Cardiac septum (tissue), 1 donor: ENCODE measurements at regions of chr9 and their contacts with region 1.

Region 1: GRCh38 chr9:68584189-68585033 is 43.7 kb upstream of the TMEM252 start:
- DNase-seq: peak; percentile 93

Region 2: DNA sequence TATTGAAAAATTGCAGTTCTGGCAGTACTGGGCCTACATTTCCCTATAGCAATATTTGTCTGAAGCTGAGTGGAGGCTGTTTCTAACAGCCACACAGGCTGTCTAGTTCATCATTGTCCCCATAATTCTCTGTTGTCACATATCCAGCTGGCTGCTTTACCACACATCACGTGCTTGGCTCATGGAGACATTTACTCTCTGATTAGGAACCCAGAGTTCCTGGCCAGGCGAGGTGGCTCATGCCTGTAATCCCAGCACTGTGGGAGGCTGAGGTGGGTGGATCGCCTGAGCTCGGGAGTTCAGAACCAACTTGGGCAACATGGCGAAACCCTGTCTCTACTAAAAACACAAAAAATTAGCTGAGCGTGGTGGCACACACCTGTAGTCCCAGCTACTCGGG is 146.6 kb before region 1 on chr9:
- intact Hi-C with region 1: no loop called
- DNase-seq: peak; percentile 82

Region 3: DNA sequence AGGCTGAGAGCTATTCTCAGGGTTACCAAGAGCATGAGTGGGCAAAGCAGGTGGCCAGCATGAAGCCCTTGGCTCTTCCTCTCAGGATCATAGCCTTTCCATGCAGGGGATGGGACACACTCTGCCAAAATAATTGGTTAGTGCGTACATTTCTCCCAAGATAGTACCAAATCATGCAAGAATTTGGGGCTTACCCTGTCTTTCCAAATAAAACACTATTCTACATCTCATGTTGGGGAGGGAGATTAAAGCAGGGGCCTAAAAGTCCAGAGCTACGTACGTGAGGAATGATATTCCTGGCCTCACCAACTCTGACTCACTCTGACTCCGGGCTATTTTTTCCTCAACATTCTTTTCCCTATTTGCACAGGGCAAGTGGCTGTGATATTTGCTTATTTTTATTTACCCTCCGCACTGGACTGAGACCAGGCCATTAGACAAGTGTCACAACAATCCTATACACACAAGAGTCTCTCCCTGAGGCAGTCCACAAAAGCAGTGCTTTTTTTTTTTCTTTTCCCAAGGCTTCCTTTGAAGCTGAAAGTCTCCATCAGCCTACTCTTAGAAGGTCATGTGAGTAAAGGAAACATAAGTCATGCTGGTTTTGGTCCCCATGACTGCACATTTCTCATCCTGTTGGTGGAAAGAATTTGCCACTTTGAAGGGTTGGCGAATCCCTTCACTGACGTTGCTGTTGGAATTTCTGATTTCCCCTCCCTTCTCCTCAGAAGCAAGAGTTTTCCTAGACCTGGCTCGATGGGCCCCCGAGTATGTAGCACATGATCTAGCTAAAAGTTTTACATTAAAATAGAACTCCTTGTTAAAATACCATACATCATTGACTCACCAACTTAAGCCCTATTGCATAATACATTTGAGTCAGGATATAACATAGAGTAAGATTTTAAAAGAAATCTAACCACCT is 83.7 kb before region 1 on chr9:
- intact Hi-C with region 1: no loop called
- DNase-seq: no peak

Region 4: DNA sequence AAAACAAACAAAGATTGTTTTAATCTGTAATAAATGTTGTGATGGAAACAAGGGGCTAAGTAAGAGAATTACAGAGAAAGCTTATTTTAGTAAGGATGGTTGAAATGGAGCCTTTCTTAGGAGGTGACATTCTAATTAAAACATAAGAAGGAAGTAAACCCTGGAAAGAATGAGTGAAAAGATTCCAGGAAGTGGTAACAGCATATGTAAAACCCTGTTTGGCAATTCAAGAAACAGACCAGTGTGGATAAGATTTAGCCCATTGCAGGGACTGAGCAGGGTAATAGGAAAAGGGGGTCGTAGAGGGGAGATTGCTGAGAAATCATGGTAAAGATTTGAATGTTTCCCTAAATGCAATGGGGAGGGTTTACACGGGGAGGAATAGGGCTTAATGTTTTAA is 99.0 kb after region 1 on chr9:
- intact Hi-C with region 1: loop called (anchors 5 kb)
- DNase-seq: no peak

Region 5: GRCh38 chr9:68697851-68698250 is 113.4 kb after region 1 on chr9:
- intact Hi-C with region 1: loop called (anchors 5 kb)
- DNase-seq: no peak

Region 6: DNA sequence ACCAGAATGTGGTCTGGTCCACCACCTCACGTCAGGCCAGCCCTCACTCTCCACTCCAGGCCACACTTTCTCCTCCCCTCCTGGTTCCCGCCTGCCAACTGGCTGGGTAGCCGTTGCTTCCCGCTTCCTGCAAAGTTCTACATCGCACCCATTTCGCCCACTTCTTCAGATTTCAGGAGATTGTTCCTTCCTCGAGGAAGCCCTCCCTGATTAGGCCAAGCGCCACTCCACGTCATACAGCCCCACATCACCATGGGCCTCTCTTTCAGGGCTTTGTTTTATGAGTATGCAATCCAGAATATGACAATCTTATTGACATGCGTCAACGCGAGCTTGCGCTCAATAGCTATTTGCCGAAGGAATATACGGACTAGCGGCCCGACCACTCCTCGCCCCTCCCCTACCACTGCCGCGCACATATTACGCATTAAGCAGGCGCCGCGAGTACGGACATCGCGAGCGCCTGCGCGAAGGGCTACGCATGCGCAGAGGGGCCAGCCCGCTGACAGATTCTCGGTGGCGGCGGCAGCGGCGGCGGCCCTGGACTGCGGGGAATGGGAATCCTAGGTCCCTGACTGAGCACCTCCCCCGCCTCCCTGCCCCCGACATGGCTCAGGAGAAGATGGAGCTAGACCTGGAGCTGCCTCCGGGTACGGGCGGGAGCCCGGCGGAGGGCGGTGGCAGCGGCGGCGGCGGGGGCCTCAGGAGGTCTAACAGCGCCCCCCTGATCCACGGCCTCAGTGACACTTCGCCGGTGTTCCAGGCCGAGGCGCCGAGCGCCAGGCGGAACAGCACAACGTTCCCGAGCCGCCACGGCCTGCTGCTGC is 195.4 kb after region 1 on chr9:
- intact Hi-C with region 1: loop called (anchors 5 kb)
- DNase-seq: peak; percentile 95

Region 7: DNA sequence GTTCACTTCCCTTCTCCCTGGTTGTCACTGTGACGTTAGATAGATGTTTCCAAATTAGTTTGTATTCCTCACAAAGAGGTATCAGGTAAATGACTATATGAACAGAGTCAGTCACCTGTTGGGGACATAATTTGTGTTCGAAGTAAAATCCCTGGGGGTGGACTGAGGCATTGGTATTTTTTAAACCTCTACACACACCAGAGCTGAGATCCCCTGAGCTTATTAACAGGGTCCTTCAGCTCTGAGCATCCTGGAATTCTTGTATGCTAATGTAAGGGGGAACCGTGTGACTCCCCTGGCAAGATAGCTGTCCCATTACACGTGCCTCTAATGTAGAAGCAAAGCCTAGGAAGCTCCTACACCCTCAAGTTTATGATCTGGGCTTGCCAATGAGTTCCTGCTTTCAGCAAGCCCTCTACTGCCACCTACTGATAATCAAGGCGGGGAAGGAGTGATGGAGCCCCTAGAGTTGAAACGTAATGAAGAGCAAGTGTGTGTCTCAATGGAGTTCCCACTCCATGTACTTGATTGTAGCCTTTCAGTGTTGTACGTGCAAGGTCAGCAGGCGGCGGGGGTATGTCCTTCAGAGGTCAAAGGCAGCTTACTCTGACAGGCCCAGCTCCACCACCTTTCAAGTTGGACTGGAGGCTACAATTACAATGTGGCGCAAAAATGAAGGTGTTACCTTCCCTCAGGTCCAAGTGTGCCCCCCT is 415.1 kb after region 1 on chr9:
- intact Hi-C with region 1: loop called (anchors 1 kb)
- DNase-seq: no peak

Region 8: DNA sequence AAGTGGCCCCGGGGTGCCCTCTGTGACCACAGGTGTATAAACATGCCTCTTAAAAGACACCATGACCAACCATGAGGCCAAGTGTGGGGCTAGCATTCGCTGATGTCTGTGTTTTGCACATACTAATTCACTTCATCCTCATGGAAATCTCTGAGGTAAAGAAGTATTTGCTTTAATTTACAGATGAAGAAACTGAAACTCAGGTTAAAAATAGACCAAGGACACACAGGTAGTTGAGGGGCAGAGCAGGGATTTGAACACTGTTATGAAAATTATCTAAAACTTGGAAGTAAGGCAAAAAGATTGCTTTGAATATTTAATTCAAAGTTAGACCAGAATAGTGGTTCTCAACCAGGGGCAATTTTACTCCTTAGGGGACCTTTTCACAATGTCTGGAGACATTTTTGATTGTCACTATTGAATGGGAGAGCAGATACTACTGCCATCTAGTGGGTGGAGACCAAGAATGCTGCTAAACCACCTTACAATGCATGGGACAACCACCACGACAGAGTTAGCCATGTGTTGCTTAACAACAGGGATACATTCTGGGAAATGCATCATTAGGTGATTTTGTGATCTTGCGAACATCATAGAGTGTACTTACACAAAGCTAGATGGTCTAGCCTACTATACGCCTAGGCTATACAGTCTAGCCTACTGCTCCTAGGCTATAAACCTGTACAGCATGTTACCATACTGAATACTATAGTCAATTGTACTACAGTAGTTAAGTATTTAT is 443.1 kb after region 1 on chr9:
- intact Hi-C with region 1: loop called (anchors 5 kb)
- DNase-seq: no peak